ENCODE measurements at regions of chr11 and their contacts with region 1.

Region 1: DNA sequence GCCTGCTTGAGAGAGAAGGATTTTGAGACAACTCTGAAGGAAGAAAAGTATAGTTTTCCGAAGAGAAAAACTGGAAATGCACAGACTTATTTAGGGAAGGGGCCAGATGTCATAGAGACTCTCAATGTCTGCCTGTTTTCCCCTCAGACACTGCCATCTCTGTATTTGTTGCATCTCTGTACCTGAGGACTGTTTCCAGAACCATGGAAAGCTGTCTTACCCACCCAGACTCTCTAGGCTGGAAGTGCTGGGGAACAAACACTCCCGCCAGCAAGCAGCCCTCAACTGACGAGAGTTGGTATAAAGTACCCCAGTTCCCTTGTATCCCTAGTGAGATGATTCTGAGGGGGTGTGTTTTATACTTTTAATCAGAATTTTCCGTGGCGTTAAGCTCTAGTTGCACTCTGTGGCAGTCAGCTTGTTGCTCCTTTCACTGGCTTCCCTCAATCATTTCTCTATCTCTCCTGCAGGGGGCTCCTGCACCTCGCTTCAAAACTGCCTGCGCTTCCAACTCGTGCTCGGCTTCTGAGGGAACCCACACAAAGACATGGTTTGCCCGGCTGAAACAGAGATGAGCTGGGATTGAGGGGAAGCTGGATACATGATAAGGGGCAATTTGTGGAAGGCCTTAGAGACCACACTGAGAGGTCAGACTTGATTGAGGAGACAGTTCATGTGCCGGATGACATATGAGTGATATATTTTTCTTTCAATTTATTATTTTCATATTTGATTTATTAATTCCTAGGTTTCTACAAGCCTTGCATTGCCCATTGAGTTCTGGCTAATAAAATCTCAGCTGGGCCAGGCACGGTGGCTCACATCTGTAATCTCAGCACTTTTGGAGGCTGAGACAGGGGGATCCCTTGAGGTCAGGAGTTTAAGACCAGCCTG is 36.9 kb upstream of the CLPB start:
- DNase-seq: peak; percentile 77
- ATAC-seq: peak; percentile 81

Region 2: GRCh38 chr11:71927811-71928736 is 543.2 kb before region 1 on chr11 and contains the start of gene XNDC1N:
- intact Hi-C with region 1: no loop called
- DNase-seq: peak; percentile 78
- ATAC-seq: peak; percentile 92
- total RNA-seq, gene XNDC1N: 3.2 TPM

Region 3: GRCh38 chr11:72483412-72484186 is 12.3 kb after region 1 on chr11:
- intact Hi-C with region 1: no loop called
- DNase-seq: no peak
- ATAC-seq: peak; percentile 58

Region 4: DNA sequence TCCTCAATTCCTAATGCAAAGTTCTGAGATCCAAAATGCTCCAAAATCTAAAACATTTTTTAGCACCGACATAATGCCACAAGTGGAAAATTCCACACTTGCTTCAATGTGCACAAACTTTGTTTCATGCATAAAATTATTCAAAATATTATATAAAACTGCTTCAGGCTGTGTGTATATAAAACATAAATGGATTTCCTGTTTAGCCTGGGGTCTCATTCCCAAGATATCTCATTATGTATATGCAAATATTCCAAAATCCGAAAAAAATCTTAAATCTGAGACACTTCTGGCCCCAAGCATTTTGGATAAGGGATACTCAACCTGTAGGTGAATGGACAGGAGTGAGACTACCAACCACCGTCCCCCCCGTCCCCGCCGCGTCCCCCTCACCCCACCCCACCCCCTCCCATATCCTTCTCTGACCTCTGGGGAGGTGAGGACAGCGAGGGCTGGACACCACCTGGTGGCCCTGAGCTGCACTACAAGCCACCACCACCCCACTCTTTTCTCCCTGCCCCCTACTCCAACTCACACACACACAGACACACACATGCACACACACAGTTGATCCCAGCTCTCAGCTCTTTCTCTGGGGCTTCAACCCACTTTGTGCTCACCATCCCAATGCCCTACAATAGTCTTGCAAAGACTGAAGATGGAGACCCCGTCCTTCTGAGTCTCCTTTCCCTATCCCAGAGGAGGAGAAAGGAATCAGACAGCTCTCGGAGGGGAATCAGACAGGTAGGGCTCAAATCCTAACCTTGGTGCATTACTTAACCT is 102.0 kb after region 1 on chr11:
- intact Hi-C with region 1: loop called (anchors 5 kb)
- DNase-seq: no peak
- ATAC-seq: peak; percentile 68